Heart right ventricle (tissue), 16 donors: ENCODE measurements at regions of chr13 and their contacts with region 1.

Region 1: DNA sequence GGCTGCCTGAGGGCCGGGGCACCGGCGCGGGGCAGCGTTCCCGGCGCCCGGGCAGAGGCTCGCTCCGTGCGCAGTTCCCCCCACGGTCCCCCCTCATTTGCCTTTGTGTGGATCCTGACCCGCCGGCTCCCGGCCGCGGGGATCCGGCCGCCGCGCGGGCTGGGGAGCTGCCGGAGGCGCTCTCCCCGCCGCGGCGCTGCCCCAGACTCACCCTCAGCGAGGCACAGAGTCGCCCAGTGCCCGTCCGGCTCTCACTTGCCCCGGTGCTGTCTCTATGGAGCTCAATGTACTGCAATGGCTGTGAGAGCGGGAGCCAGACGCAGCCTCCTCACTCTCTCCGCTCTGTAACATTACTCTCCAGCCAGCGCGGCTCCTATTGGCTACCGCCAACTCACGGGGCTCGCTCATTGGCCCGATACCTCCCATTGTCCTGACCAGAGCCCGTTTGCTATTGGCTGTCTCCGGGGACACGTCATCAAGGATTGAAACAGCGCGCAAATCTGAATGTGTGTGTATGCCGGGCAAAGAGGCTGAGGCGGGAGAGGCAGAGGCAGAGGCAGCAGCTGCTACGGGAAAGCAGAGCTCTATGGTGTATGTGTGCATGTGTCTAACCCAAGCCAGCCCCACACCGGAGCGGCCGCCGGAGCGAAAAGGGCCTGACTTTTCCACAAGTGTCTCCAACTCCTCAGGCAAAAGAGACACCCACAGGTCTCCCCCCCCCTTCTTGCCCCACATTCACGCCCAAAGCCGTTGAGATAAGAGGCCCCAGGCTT is at the start of gene HMGB1:
- DNase-seq: peak; percentile 96 to 98
- ATAC-seq: peak; percentile 95 to 99 (median 98)
- H3K4me3 ChIP-seq: peak within 1 kb of the TSS; percentile 54 to 98 (median 88)
- H3K27ac ChIP-seq: peak within 1 kb of the TSS; percentile 96 to 100 (median 99)
- H3K4me1 ChIP-seq: peaks cover 9 to 42% (median 35%) of the 10 kb centered on the region in 9 donors
- H3K27me3 ChIP-seq: no peaks in the 10 kb centered on the region
- CTCF ChIP-seq: no peak
- total RNA-seq, gene HMGB1: 142 to 180 (median 159) TPM

Region 2: DNA sequence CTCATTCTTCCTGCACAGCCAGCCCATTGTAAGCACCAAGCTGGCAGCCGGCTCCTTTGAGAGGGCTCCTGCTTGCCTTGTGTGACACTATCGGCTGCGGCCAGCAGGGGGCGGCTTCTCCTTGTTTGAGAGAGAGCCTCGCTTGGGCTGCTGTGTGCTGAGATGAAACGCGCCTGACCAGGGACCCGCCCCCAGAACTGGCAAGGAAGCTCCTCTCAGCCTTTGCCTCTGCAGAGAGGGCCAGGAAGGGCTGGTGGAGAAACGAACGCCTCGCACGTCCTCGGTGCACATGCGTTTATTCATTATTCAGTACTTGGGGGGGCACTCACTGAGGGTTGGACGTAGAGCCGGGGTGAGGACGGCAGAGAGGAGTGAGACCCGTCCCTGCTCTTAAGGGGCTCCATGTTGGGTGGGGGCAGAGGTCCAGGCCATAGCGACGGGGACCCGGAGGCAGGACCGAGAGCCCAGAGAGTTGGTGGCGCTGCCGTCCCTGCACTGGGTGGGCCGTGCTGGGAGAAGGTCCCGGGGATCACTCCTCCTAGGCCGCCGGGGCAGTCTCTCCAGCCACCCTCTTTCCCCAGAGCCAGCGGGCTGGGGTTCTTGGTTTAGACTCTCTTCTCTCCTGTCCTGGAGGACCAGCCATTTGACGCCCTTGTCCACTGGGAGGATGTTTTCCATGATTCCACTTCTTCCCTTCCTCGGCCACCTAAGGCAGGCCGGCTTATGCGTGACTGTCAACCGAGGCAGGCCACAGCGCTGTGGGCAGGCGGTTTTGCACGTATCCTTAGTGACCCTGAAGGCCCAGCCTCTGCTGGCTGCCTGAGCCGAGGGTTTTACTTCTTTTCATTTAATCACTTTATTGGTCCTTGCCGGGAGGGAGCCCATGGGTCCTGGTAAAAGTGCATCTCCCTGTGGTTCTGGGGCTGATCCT is 332.9 kb before region 1 on chr13:
- intact Hi-C with region 1: loop called in 5 of 10 experiments (anchors 2 to 5 kb)
- DNase-seq: peak; percentile 96
- ATAC-seq: peak; percentile 94 to 98 (median 96)
- H3K4me3 ChIP-seq: no peak overlapping the region
- H3K27ac ChIP-seq: peak overlapping the region in 1 of 10 donors; percentile 15
- H3K4me1 ChIP-seq: peaks cover 0 to 20% (median 4%) of the 10 kb centered on the region in 9 donors
- H3K27me3 ChIP-seq: no peaks in the 10 kb centered on the region
- CTCF ChIP-seq: peak; percentile 83 to 97 (median 95)

Region 3: GRCh38 chr13:30355384-30355699 is 110.4 kb before region 1 on chr13:
- intact Hi-C with region 1: loop called in 3 of 10 experiments (anchors 5 to 10 kb)
- DNase-seq: peak in 1 of 2 donors; percentile 37
- ATAC-seq: peak in 7 of 8 donors; percentile 63 to 87 (median 79)
- H3K4me3 ChIP-seq: no peak overlapping the region
- H3K27ac ChIP-seq: no peak overlapping the region
- H3K4me1 ChIP-seq: peaks cover 0 to 11% (median 0%) of the 10 kb centered on the region in 9 donors
- H3K27me3 ChIP-seq: no peaks in the 10 kb centered on the region
- CTCF ChIP-seq: peak; percentile 20 to 69 (median 60)

Region 4: DNA sequence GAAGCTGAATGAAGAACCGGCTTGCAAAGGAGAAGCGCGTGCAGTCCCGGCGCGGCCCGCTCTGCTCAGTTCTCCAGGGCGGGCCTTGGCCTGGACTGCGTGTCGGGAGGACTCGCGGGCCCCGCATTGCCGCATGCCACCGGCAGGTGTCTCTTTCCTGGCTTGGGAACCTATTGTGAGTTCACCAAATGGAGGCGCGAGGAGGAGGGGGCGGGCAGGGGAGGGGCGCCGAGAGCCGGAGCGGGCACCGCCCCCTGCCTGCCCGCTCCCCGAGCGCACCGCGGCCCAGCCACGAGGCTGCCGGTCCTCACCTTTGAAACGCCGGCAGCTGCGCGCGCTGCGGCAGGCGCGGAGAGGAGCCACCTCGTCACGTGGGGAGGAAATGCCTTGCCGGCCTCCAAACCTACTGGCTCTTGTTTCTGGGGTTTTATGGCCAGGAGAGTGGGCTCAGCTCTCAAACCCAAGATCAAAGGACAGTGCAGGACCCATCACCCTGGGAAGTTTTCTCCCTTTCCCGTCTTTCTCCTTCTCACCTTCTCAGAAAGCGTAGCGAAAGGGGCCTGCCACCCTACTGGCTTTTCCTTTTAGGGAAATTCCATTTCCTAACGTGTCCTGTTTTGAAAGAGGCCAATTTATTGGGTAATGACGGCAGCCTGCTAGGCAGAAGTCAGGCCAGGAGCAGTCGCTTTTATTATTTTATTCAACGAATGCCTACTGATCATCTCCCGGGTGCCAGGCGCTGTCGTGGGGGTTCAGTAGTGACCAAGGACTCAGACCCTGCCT is 57.3 kb before region 1 on chr13:
- intact Hi-C with region 1: loop called in 9 of 10 experiments (anchors 1 to 10 kb)
- DNase-seq: peak; percentile 95 to 97
- ATAC-seq: peak; percentile 95 to 98 (median 96)
- H3K4me3 ChIP-seq: peak overlapping the region in 9 of 10 donors; percentile 23 to 56 (median 48)
- H3K27ac ChIP-seq: peak overlapping the region; percentile 27 to 92 (median 84)
- H3K4me1 ChIP-seq: peaks cover 0 to 28% (median 11%) of the 10 kb centered on the region in 9 donors
- H3K27me3 ChIP-seq: no peaks in the 10 kb centered on the region
- CTCF ChIP-seq: peak; percentile 71 to 83 (median 79)

Region 5: GRCh38 chr13:30572859-30573275 is 107.1 kb after region 1 on chr13:
- intact Hi-C with region 1: loop called in 3 of 10 experiments (anchors 10 kb)
- DNase-seq: peak in 1 of 2 donors; percentile 42
- ATAC-seq: peak in 6 of 8 donors; percentile 75 to 82 (median 77)
- H3K4me3 ChIP-seq: peak overlapping the region in 9 of 10 donors; percentile 25 to 51 (median 39)
- H3K27ac ChIP-seq: peak overlapping the region in 8 of 10 donors; percentile 38 to 80 (median 62)
- H3K4me1 ChIP-seq: peaks cover 0 to 57% (median 25%) of the 10 kb centered on the region in 9 donors
- H3K27me3 ChIP-seq: no peaks in the 10 kb centered on the region
- CTCF ChIP-seq: peak in 6 of 9 donors; percentile 16 to 59 (median 48)

Region 6: DNA sequence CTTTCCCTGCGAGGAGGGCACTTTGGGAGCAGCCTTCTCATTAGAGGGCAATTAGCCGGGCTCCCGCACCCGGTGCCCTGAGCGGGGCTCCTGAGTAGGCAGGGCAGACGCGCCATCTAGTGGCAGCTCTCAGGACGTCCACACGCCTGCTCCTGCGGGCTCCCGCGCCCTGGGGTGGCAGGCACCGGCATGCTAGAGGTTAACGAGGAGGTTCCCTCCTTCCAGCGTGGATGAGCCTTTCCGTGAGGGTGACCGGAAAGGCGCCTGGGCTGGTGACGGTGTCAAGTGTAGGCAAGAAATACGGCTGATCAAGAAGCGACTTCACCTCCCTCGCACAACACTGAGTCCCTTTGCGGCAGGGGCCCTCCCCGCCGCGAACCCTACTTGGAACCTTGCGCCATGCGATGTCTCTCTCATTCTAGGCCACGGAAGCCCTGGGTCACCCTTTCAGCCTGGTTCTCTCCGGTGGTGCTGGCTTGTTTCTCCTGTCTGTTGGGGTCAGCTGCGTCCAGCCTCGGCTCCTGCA is 337.2 kb after region 1 on chr13:
- intact Hi-C with region 1: loop called in 6 of 10 experiments (anchors 2 to 10 kb)
- DNase-seq: peak; percentile 82 to 88
- ATAC-seq: peak; percentile 95 to 98 (median 96)
- H3K4me3 ChIP-seq: peak overlapping the region in 9 of 10 donors; percentile 26 to 57 (median 50)
- H3K27ac ChIP-seq: peak overlapping the region in 5 of 10 donors; percentile 10 to 61 (median 40)
- H3K4me1 ChIP-seq: peaks cover 0 to 28% (median 23%) of the 10 kb centered on the region in 9 donors
- H3K27me3 ChIP-seq: no peaks in the 10 kb centered on the region
- CTCF ChIP-seq: peak; percentile 86 to 99 (median 97)